PC-3 (cell line): ENCODE measurements at regions of chr4 and their contacts with region 1.

Region 1: DNA sequence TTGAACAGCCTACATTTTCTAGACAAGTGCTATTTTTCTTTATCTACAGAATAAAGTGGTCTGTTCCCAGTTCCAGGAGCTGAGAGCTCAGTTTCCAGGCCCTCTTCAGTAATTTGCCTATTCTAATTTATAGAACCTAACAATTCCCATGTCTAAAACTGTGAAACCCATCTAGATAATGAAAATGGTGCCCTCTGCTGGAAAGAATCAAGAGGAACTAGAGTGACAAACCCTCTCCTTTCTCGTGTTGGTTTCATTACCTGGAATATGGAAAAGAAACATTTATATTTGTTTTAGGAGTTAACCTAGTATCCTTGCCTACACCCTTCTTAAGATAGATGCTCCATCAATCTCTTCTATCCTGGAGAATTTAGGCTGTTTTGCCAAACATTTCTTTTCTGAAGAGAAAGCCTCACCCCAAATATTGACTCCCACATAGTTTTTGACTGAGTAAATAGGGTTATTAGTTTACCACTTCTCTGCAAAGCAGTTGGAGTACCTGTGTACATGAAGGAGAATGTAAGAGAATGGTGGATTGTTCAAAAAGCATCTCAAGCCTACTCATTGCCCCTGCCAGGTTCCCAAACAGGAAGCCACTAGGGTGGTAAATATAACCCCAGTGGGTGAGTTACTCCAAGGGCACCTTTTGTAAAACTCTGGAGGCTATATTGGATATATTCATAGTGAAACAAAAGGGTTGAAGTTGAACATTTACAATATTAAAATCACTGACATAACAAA is 121.6 kb downstream of the RASL11B start:
- DNase-seq: peak; percentile 83
- ATAC-seq: peak; percentile 80
- H3K4me3 ChIP-seq: no peak overlapping the region
- H3K27ac ChIP-seq: no peak overlapping the region
- H3K4me1 ChIP-seq: peaks cover 12% of the 10 kb centered on the region
- H3K27me3 ChIP-seq: no peaks in the 10 kb centered on the region
- CTCF ChIP-seq: peak; percentile 90

Region 2: GRCh38 chr4:52234561-52235440 is 748.9 kb before region 1 on chr4:
- CTCF ChIA-PET with region 1: interaction called, 3 read pairs
- POLR2A ChIA-PET with region 1: no interaction called
- intact Hi-C with region 1: loop called (anchors 1 kb)
- DNase-seq: peak; percentile 91
- ATAC-seq: peak; percentile 99
- H3K4me3 ChIP-seq: peak overlapping the region; percentile 50
- H3K27ac ChIP-seq: no peak overlapping the region
- H3K4me1 ChIP-seq: 0 out of 2 replicates have a peak, but pooled peaks cover 3% of the 10 kb centered on the region
- H3K27me3 ChIP-seq: peaks cover 13% of the 10 kb centered on the region; the same call in 1 of the 2 replicates
- CTCF ChIP-seq: peak; percentile 95

Region 3: GRCh38 chr4:52376132-52376704 is 607.5 kb before region 1 on chr4:
- CTCF ChIA-PET with region 1: interaction called, 5 read pairs
- POLR2A ChIA-PET with region 1: no interaction called
- intact Hi-C with region 1: loop called (anchors 1 kb)
- DNase-seq: peak; percentile 77
- ATAC-seq: no peak; the same call in 1 of the 2 replicates
- H3K4me3 ChIP-seq: no peak overlapping the region
- H3K27ac ChIP-seq: no peak overlapping the region
- H3K4me1 ChIP-seq: peaks cover 11% of the 10 kb centered on the region
- H3K27me3 ChIP-seq: peaks cover 24% of the 10 kb centered on the region
- CTCF ChIP-seq: peak; percentile 88

Region 4: GRCh38 chr4:52545099-52546069 is 438.3 kb before region 1 on chr4:
- CTCF ChIA-PET with region 1: interaction called, 14 read pairs
- POLR2A ChIA-PET with region 1: interaction called, 6 read pairs
- intact Hi-C with region 1: loop called (anchors 2 kb)
- DNase-seq: peak; percentile 90
- ATAC-seq: peak; percentile 89
- H3K4me3 ChIP-seq: peak overlapping the region; percentile 38; the same call in 1 of the 2 replicates
- H3K27ac ChIP-seq: no peak overlapping the region
- H3K4me1 ChIP-seq: peaks cover 3% of the 10 kb centered on the region; the same call in 1 of the 2 replicates
- H3K27me3 ChIP-seq: peaks cover 11% of the 10 kb centered on the region; the same call in 1 of the 2 replicates
- CTCF ChIP-seq: peak; percentile 98

Region 5: DNA sequence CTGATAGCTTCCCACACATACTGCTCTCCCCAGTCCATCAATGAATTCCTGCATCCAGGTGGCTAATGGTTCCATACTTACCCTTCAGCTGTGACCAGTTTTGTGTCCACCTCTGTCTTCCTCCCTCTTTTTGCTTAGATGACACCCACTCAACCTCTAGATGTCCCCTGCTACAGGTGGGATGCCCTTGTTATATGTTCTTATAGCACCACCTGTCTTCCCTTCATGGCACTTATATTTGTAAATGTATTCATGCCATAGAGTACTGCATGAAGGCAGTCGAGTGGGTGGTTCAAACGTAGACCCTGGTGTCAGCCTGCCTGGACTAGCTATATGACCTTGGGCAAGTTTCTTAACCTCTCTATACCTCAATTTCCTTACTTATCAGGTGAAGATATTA is 318.1 kb before region 1 on chr4:
- CTCF ChIA-PET with region 1: no interaction called
- POLR2A ChIA-PET with region 1: no interaction called
- intact Hi-C with region 1: loop called (anchors 2 kb)
- DNase-seq: peak; percentile 47
- ATAC-seq: peak; percentile 86
- H3K4me3 ChIP-seq: no peak overlapping the region
- H3K27ac ChIP-seq: no peak overlapping the region
- H3K4me1 ChIP-seq: peaks cover under 1% of the 10 kb centered on the region; the same call in 1 of the 2 replicates
- H3K27me3 ChIP-seq: no peaks in the 10 kb centered on the region
- CTCF ChIP-seq: peak; percentile 72

Region 6: DNA sequence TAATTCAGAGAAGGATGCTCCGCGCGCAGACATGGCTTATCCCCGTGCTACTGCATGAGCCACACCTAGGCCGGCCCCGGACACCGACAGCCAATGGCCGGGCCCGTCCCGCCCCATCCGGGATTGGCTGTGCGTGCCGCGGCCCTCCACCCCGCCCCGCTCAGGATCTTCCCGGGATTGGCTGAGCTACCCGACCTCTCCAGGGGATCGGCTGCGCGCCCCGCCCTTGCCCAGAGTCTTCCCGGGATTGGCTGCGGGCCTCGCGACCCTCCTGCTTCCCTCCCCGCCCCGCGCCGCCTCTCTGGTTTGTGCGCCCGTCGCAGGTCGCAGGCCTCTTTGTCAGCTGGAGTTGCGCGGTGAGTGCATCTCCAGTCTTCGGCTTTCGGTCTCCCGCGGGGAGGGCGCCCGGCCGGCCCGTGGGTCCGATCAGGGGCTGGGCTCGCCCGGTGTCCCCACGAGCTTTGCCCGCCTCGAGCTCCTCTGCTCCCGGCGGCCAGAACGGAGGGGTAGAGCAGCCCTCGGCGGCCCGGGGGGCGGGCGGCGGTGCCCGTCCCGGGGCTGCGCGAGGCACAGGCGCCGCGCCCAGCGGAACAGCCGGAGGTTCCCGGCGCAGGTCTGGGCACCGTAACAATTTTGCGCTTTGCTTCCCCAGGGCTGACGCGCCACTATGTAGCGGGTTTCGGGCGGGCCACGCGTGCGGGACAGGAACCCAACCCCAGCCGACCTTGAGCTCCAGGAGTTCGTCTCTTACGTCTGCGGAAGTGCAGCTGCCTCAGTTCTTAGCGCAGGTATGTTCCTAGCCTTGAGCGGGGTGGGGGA is 271.4 kb before region 1 on chr4:
- CTCF ChIA-PET with region 1: no interaction called
- POLR2A ChIA-PET with region 1: no interaction called
- intact Hi-C with region 1: loop called (anchors 2 kb)
- DNase-seq: peak; percentile 98
- ATAC-seq: peak; percentile 98
- H3K4me3 ChIP-seq: peak overlapping the region; percentile 82
- H3K27ac ChIP-seq: peak overlapping the region; percentile 48
- H3K4me1 ChIP-seq: peaks cover 29% of the 10 kb centered on the region
- H3K27me3 ChIP-seq: no peaks in the 10 kb centered on the region
- CTCF ChIP-seq: no peak

Region 7: DNA sequence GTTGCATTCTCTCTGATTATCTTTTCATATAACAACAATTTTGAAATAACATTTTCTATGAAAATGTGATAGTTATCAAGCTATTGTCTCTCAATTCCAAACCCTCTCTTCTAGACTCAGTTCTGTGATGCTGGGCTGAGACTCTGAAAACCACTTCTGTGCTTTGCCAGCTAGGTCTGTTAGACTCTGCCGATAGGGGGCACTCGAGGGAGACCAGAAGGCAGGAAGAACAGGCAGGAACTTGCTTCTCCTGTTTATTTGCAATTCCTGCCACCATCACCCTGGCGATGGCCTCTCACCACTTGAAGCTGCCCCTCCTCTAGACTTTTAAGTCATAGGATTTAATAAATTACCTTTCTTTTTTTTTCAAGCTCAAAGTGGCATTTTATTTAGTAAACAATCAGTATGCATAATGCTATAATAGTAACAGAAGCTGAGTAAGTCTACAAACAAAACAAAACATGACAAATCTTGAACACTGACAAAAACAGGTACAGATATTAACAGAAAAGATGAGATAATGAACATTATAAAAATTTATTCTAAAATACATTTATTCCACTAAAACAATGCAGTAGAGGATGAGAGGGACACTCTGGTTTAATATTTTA is 71.9 kb before region 1 on chr4:
- CTCF ChIA-PET with region 1: interaction called, 3 read pairs
- POLR2A ChIA-PET with region 1: no interaction called
- intact Hi-C with region 1: loop called (anchors 1 kb)
- DNase-seq: peak; percentile 89
- ATAC-seq: peak; percentile 74
- H3K4me3 ChIP-seq: no peak overlapping the region
- H3K27ac ChIP-seq: no peak overlapping the region
- H3K4me1 ChIP-seq: peaks cover 6% of the 10 kb centered on the region; the same call in 1 of the 2 replicates
- H3K27me3 ChIP-seq: no peaks in the 10 kb centered on the region
- CTCF ChIP-seq: peak; percentile 98